ENCODE measurements at regions of chr13 and their contacts with region 1.

Region 1: GRCh38 chr13:42333613-42334328 is 61.8 kb downstream of the AKAP11 start:
- DNase-seq: peak in 4 of 5 donors; percentile 24 to 40 (median 32)
- H3K4me3 ChIP-seq: no peak overlapping the region
- H3K4me3 Mint-ChIP-seq: no peak overlapping the region
- H3K27ac ChIP-seq: no peak overlapping the region
- H3K27ac Mint-ChIP-seq: peak overlapping the region in 2 of 7 donors; percentile 18 to 55
- H3K4me1 ChIP-seq: peaks cover 22% of the 10 kb centered on the region
- H3K4me1 Mint-ChIP-seq: peaks cover 13 to 27% (median 19%) of the 10 kb centered on the region in 4 donors
- H3K27me3 ChIP-seq: no peaks in the 10 kb centered on the region
- H3K27me3 Mint-ChIP-seq: no peaks in the 10 kb centered on the region

Region 2: GRCh38 chr13:42345367-42345766 is 11.6 kb after region 1 on chr13:
- CTCF ChIA-PET with region 1: interaction called, 17 read pairs
- POLR2A ChIA-PET with region 1: no interaction called
- intact Hi-C with region 1: no loop called
- DNase-seq: no peak
- H3K4me3 ChIP-seq: no peak overlapping the region
- H3K4me3 Mint-ChIP-seq: no peak overlapping the region
- H3K27ac ChIP-seq: no peak overlapping the region
- H3K27ac Mint-ChIP-seq: no peak overlapping the region
- H3K4me1 ChIP-seq: no peaks in the 10 kb centered on the region
- H3K4me1 Mint-ChIP-seq: peaks cover 1 to 12% (median 5%) of the 10 kb centered on the region in 4 donors
- H3K27me3 ChIP-seq: no peaks in the 10 kb centered on the region
- H3K27me3 Mint-ChIP-seq: no peaks in the 10 kb centered on the region

Region 3: DNA sequence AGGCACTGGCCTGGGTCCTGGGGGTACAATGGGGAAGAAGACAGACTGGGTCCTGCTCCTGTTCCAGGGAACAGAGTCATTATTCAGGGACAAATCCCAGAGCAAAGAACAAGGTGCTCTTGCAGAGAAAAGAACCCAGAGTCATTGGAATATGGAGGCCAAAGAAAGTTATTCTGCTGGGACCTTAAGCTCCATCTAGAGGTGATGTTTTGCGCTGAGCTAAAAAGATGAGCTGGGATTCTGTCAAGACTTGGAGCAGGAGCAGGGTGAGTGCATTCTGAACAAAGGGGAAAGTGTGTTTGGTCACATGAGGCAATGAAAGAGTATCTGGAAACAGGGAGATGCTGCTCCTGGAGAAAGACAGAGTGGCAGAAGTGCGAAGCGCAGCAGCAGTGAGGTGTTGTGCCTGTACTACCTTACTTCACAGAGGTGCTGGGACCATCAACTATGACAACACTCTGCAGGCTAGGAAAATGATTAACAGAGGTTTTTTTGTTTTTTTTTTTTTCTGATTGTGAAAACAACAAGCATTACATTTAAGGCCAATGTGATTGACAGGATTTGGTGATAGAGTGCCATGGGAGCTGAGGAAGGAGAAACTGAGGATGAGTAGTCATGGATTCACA is 144.9 kb after region 1 on chr13:
- CTCF ChIA-PET with region 1: interaction called, 53 read pairs
- POLR2A ChIA-PET with region 1: interaction called, 5 read pairs
- intact Hi-C with region 1: loop called (anchors 1 kb)
- DNase-seq: peak in 2 of 5 donors; percentile 5 to 11
- H3K4me3 ChIP-seq: no peak overlapping the region
- H3K4me3 Mint-ChIP-seq: no peak overlapping the region
- H3K27ac ChIP-seq: no peak overlapping the region
- H3K27ac Mint-ChIP-seq: peak overlapping the region in 1 of 7 donors; percentile 20
- H3K4me1 ChIP-seq: no peaks in the 10 kb centered on the region
- H3K4me1 Mint-ChIP-seq: peaks cover 0 to 6% (median 3%) of the 10 kb centered on the region in 4 donors
- H3K27me3 ChIP-seq: no peaks in the 10 kb centered on the region
- H3K27me3 Mint-ChIP-seq: no peaks in the 10 kb centered on the region

Region 4: GRCh38 chr13:42497798-42498197 is 164.0 kb after region 1 on chr13:
- CTCF ChIA-PET with region 1: interaction called, 6 read pairs
- POLR2A ChIA-PET with region 1: no interaction called
- intact Hi-C with region 1: loop called (anchors 1 kb)
- DNase-seq: no peak
- H3K4me3 ChIP-seq: no peak overlapping the region
- H3K4me3 Mint-ChIP-seq: no peak overlapping the region
- H3K27ac ChIP-seq: no peak overlapping the region
- H3K27ac Mint-ChIP-seq: no peak overlapping the region
- H3K4me1 ChIP-seq: peaks cover 27% of the 10 kb centered on the region
- H3K4me1 Mint-ChIP-seq: peaks cover 20 to 34% (median 31%) of the 10 kb centered on the region in 4 donors
- H3K27me3 ChIP-seq: no peaks in the 10 kb centered on the region
- H3K27me3 Mint-ChIP-seq: no peaks in the 10 kb centered on the region

Region 5: GRCh38 chr13:42574435-42575311 is 240.9 kb after region 1 on chr13:
- CTCF ChIA-PET with region 1: no interaction called
- POLR2A ChIA-PET with region 1: no interaction called
- intact Hi-C with region 1: loop called (anchors 1 kb)
- DNase-seq: peak; percentile 25 to 50 (median 33)
- H3K4me3 ChIP-seq: peak overlapping the region; percentile 53 to 55
- H3K4me3 Mint-ChIP-seq: peak overlapping the region; percentile 86 to 91 (median 89)
- H3K27ac ChIP-seq: no peak overlapping the region
- H3K27ac Mint-ChIP-seq: peak overlapping the region; percentile 8 to 87 (median 28)
- H3K4me1 ChIP-seq: peaks cover 12% of the 10 kb centered on the region
- H3K4me1 Mint-ChIP-seq: peaks cover 12 to 36% (median 24%) of the 10 kb centered on the region in 4 donors
- H3K27me3 ChIP-seq: no peaks in the 10 kb centered on the region
- H3K27me3 Mint-ChIP-seq: peaks cover 1 to 7% of the 10 kb centered on the region in 2 donors